Activated CD8-positive, alpha-beta memory T cell treated with anti-CD3 and anti-CD28 coated beads, Interleukin-2, amount 10 ng/mL, durations not matched to agents 7 days and 5 days (primary cell): ENCODE measurements at regions of chr15 and their contacts with region 1.

Region 1: DNA sequence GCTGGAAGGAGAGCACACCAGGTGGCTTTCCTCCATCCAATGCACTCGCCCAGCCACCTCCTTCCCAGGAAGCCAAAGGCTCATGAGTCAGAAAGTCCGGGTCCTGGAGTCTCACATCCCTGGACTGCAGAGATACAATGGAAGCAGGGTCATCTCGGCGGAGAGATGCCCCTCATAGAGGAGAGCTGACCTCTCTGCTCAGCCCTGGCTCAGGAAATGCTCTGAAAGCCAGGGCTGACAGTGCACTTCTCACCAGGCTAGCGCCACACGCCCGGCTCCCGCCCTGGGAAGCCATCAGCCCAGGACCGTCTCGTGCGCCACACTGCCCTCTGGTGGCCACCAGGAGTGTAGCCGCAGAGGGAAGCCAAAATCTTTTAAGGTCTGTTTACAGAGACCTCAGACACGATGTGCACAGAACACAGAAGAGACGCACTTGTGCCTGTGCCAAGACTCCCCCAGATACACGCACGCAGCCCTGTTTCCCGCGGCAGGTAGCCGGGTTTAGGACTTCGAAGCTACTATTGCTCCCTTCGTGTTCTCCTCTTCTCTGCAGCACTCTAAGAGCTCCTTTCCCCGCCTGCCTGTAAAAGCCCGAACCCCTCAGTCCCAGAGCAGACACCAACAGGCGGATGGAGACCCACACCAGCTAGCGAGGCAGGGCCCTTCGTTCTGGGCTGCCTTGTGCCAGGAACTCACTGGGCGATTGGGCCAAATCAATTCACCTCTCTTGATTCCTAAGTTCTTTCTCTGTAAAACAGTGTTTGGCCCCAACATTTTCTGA is 9.7 kb downstream of the NTRK3 start:
- DNase-seq: peak; percentile 75
- ATAC-seq: peak; percentile 85
- H3K4me3 Mint-ChIP-seq: no peak overlapping the region
- H3K27ac Mint-ChIP-seq: no peak overlapping the region
- H3K4me1 Mint-ChIP-seq: peaks cover 3% of the 10 kb centered on the region
- H3K27me3 Mint-ChIP-seq: peaks cover 14% of the 10 kb centered on the region

Region 2: GRCh38 chr15:88258093-88258641 is 11.3 kb after region 1 on chr15:
- CTCF ChIA-PET with region 1: interaction called, 14 read pairs
- DNase-seq: no peak
- ATAC-seq: no peak
- H3K4me3 Mint-ChIP-seq: no peak overlapping the region
- H3K27ac Mint-ChIP-seq: peak overlapping the region; percentile 47
- H3K4me1 Mint-ChIP-seq: peaks cover 15% of the 10 kb centered on the region
- H3K27me3 Mint-ChIP-seq: peaks cover 75% of the 10 kb centered on the region

Region 3: GRCh38 chr15:88274553-88275460 is 28.0 kb after region 1 on chr15:
- CTCF ChIA-PET with region 1: interaction called, 35 read pairs
- DNase-seq: peak; percentile 66
- ATAC-seq: peak; percentile 58
- H3K4me3 Mint-ChIP-seq: no peak overlapping the region
- H3K27ac Mint-ChIP-seq: no peak overlapping the region
- H3K4me1 Mint-ChIP-seq: no peaks in the 10 kb centered on the region
- H3K27me3 Mint-ChIP-seq: peaks cover 23% of the 10 kb centered on the region

Region 4: GRCh38 chr15:88323976-88324740 is 77.3 kb after region 1 on chr15:
- CTCF ChIA-PET with region 1: no interaction called
- DNase-seq: no peak
- ATAC-seq: no peak
- H3K4me3 Mint-ChIP-seq: no peak overlapping the region
- H3K27ac Mint-ChIP-seq: no peak overlapping the region
- H3K4me1 Mint-ChIP-seq: no peaks in the 10 kb centered on the region
- H3K27me3 Mint-ChIP-seq: peaks cover 5% of the 10 kb centered on the region